WTC11 (cell line): ENCODE measurements at regions of chr1 and their contacts with region 1.

Region 1: GRCh38 chr1:201481761-201482493 is 12.9 kb upstream of the PHLDA3 start:
- DNase-seq: peak; percentile 97
- ATAC-seq: peak; percentile 72
- H3K4me3 Mint-ChIP-seq: peak overlapping the region; percentile 84
- H3K27ac Mint-ChIP-seq: no peak overlapping the region
- H3K4me1 Mint-ChIP-seq: peaks cover 29% of the 10 kb centered on the region
- H3K27me3 Mint-ChIP-seq: peaks cover 4% of the 10 kb centered on the region
- CTCF ChIP-seq: peak; percentile 88

Region 2: GRCh38 chr1:201376464-201377374 is 105.2 kb before region 1 on chr1:
- CTCF ChIA-PET with region 1: interaction called, 25 read pairs
- POLR2A ChIA-PET with region 1: no interaction called
- DNase-seq: peak; percentile 86
- ATAC-seq: peak; percentile 81
- H3K4me3 Mint-ChIP-seq: peak overlapping the region; percentile 58
- H3K27ac Mint-ChIP-seq: peak overlapping the region; percentile 98
- H3K4me1 Mint-ChIP-seq: peaks cover 54% of the 10 kb centered on the region
- H3K27me3 Mint-ChIP-seq: peaks cover 7% of the 10 kb centered on the region; the same call in 1 of the 2 replicates
- CTCF ChIP-seq: peak; percentile 56

Region 3: GRCh38 chr1:201447911-201448871 is 33.7 kb before region 1 on chr1:
- CTCF ChIA-PET with region 1: interaction called, 264 read pairs
- POLR2A ChIA-PET with region 1: interaction called, 8 read pairs
- DNase-seq: peak; percentile 83
- ATAC-seq: peak; percentile 89
- H3K4me3 Mint-ChIP-seq: no peak overlapping the region
- H3K27ac Mint-ChIP-seq: no peak overlapping the region
- H3K4me1 Mint-ChIP-seq: peaks cover 35% of the 10 kb centered on the region
- H3K27me3 Mint-ChIP-seq: peaks cover 3% of the 10 kb centered on the region; the same call in 1 of the 2 replicates
- CTCF ChIP-seq: peak; percentile 80

Region 4: GRCh38 chr1:201495471-201496295 is 13.8 kb after region 1 on chr1:
- CTCF ChIA-PET with region 1: interaction called, 144 read pairs
- POLR2A ChIA-PET with region 1: interaction called, 21 read pairs
- DNase-seq: no peak
- ATAC-seq: no peak
- H3K4me3 Mint-ChIP-seq: no peak overlapping the region
- H3K27ac Mint-ChIP-seq: no peak overlapping the region; the same call in 1 of the 2 replicates
- H3K4me1 Mint-ChIP-seq: peaks cover 19% of the 10 kb centered on the region
- H3K27me3 Mint-ChIP-seq: no peaks in the 10 kb centered on the region
- CTCF ChIP-seq: no peak

Region 5: DNA sequence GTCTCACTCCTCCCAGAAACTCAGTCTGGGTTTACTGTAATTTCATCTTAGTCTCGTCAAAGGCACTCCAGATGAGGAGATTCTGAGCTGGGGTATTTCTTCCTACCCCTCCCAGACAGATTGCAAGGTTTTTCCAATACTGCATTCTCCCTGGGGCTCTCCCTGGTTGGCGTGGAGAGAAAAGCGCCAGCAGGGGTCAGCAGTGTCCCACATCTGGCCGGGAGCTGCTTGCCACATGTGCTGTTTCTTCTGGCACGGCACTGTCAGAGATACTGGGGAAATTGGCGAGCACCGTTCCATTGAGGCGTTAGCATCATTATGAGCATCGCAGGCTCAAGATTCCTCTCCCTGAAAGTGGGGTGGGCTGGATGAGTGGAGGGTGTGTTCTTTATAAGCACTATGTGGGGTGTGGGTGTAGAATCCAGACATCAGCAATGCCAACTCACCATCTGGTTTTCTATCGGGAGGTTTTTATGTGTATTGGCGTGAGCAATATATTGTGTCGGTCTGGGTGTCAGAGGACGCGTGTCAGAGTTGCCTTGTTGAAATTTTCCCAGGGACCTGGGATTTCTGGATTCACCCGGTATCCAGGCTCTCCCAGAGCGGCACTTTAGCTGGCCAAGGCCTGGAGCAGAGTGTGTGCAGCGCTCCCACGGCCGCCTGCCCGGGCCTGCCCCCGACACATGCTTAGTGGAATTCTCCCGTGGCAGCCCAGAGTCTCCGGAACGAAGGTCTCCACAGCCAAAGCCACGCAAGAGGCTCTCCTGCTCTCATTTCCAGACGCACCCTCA is 49.0 kb after region 1 on chr1:
- CTCF ChIA-PET with region 1: interaction called, 55 read pairs
- POLR2A ChIA-PET with region 1: no interaction called
- DNase-seq: peak; percentile 90
- ATAC-seq: peak; percentile 96
- H3K4me3 Mint-ChIP-seq: no peak overlapping the region
- H3K27ac Mint-ChIP-seq: 0 out of 2 replicates have a peak overlapping the region, but pooled peaks have one; percentile 50
- H3K4me1 Mint-ChIP-seq: peaks cover 23% of the 10 kb centered on the region
- H3K27me3 Mint-ChIP-seq: 0 out of 2 replicates have a peak, but pooled peaks cover under 1% of the 10 kb centered on the region
- CTCF ChIP-seq: peak; percentile 62

Region 6: GRCh38 chr1:201649761-201650622 is 168.1 kb after region 1 on chr1:
- CTCF ChIA-PET with region 1: interaction called, 16 read pairs
- POLR2A ChIA-PET with region 1: interaction called, 4 read pairs
- DNase-seq: peak; percentile 92
- ATAC-seq: peak; percentile 46
- H3K4me3 Mint-ChIP-seq: peak overlapping the region; percentile 79
- H3K27ac Mint-ChIP-seq: peak overlapping the region; percentile 82; the same call in 1 of the 2 replicates
- H3K4me1 Mint-ChIP-seq: peaks cover 55% of the 10 kb centered on the region
- H3K27me3 Mint-ChIP-seq: peaks cover 17% of the 10 kb centered on the region
- CTCF ChIP-seq: no peak

Region 7: DNA sequence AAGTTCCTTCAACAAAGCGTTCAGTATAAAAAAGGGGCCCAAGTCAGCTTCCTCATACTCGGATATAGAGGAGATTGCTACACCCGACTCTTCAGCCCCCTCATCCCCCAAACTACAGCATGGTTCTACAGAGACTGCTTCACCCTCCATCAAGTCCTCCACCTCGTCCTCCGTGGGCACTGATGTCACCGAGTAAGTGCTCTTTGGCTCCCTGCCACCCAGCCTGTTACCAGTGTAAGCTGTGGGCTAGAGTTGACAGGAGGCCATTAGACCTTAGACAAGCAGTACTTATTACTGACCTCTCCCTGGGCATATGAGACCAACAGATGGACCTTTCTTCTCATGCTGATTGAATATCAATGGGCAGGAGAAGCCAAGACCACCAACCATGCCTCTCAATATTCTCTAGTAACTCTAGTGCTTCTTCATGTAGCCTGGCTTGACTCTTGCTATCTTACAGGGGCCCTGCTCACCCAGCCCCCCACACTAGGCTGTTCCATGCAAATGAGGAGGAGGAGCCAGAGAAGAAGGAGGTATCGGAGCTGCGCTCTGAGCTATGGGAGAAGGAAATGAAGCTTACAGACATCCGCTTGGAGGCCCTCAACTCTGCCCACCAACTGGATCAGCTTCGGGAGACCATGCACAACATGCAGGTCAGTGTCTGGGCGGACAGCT is 326.2 kb after region 1 on chr1:
- CTCF ChIA-PET with region 1: no interaction called
- POLR2A ChIA-PET with region 1: no interaction called
- DNase-seq: no peak
- ATAC-seq: 0 out of 2 replicates have a peak, but pooled peaks have one; percentile 41
- H3K4me3 Mint-ChIP-seq: no peak overlapping the region
- H3K27ac Mint-ChIP-seq: no peak overlapping the region
- H3K4me1 Mint-ChIP-seq: no peaks in the 10 kb centered on the region
- H3K27me3 Mint-ChIP-seq: no peaks in the 10 kb centered on the region
- CTCF ChIP-seq: no peak